Breast epithelium (tissue), 4 donors: ENCODE measurements at regions of chr2 and their contacts with region 1.

Region 1: GRCh38 chr2:121254748-121255147 is 30.3 kb downstream of the TFCP2L1 start:
- DNase-seq: no peak
- H3K4me3 ChIP-seq: no peak overlapping the region
- H3K27ac ChIP-seq: peak overlapping the region in 1 of 2 donors; percentile 23
- H3K4me1 ChIP-seq: no peaks in the 10 kb centered on the region
- H3K27me3 ChIP-seq: no peaks in the 10 kb centered on the region
- CTCF ChIP-seq: no peak
- POLR2A ChIP-seq: no peak

Region 2: GRCh38 chr2:121210691-121211090 is 44.1 kb before region 1 on chr2:
- intact Hi-C with region 1: no loop called
- DNase-seq: no peak
- H3K4me3 ChIP-seq: no peak overlapping the region
- H3K27ac ChIP-seq: peak overlapping the region in 1 of 2 donors; percentile 29
- H3K4me1 ChIP-seq: no peaks in the 10 kb centered on the region
- H3K27me3 ChIP-seq: no peaks in the 10 kb centered on the region
- CTCF ChIP-seq: no peak
- POLR2A ChIP-seq: no peak

Region 3: GRCh38 chr2:122570641-122571040 is 1315.9 kb after region 1 on chr2:
- intact Hi-C with region 1: loop called (anchors 10 kb)
- DNase-seq: no peak
- H3K4me3 ChIP-seq: no peak overlapping the region
- H3K27ac ChIP-seq: no peak overlapping the region
- H3K4me1 ChIP-seq: no peaks in the 10 kb centered on the region
- H3K27me3 ChIP-seq: no peaks in the 10 kb centered on the region
- CTCF ChIP-seq: no peak
- POLR2A ChIP-seq: no peak